Activated naive CD4-positive, alpha-beta T cell treated with anti-CD3 and anti-CD28 coated beads for 36 hours (primary cell): ENCODE measurements at regions of chr2 and their contacts with region 1.

Region 1: GRCh38 chr2:138486363-138487198 is 15.0 kb upstream of the SPOPL start:
- DNase-seq: no peak
- H3K4me3 Mint-ChIP-seq: no peak overlapping the region
- H3K27ac Mint-ChIP-seq: no peak overlapping the region
- H3K4me1 Mint-ChIP-seq: no peaks in the 10 kb centered on the region
- H3K27me3 Mint-ChIP-seq: no peaks in the 10 kb centered on the region

Region 2: DNA sequence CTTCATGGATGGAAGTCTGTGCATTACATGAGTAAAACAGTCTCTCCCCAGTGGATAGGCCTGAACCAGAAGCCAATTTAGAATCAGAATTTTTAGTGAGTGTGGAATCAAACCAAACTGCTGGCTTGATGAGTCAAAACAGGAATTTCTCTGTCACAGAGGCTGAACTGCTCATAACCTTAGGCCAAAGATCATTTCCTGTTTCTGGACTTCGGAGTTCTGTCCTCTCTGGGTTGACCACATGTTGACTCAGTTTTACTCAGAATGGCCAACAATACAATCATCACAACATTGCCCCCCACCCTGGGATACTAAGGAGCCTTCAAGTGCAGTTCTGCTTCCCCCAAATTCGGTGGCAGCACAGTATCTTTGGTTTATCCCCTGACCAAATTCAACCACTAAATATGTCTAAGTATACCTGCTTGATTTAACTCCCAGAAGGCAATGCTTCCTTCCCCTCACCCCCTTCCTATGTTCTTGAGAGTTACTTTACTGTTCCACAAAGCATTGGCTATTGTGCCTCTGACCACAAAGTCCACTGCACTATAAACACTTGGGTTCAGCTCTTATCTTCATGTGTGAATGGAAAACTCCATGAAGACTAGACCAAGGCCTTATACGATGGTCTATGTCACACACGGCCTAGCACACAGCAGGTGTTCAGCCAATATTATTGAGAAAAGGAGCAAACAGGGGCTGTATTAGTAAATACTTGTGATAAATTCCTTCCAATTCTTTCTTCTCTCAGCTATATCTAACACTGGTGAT is 225.8 kb after region 1 on chr2:
- CTCF ChIA-PET with region 1: no interaction called
- intact Hi-C with region 1: loop called (anchors 10 kb)
- DNase-seq: no peak
- H3K4me3 Mint-ChIP-seq: no peak overlapping the region
- H3K27ac Mint-ChIP-seq: no peak overlapping the region
- H3K4me1 Mint-ChIP-seq: no peaks in the 10 kb centered on the region
- H3K27me3 Mint-ChIP-seq: peaks cover 10% of the 10 kb centered on the region

Region 3: DNA sequence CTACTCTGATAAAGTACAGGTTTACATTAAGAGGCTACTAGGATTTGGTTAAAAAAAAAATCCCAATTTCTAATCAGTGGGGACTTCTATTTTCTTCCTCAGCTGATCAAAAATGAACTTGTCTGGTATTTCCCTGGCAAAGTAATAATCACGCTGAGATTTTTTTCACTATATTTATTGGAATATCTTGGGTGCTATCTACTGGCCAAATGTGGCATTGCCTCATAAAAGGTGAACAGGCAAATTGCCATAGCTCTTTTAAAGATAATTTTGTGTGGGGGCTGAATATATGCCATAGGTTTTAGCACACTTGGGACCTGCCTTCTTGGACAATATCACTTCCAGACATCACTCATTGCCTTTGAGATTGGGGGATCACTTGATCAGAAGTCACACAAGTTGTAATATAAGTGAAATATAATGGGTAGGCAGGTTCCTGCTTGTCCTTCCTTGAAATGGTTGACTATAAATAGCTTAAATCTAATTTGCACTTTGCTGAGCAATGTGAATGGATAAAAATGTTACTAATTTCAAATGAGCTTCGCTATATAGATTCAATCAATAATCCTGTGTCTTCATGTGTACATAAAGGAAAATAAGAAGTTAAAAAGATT is 300.6 kb after region 1 on chr2:
- CTCF ChIA-PET with region 1: no interaction called
- intact Hi-C with region 1: loop called (anchors 5 kb)
- DNase-seq: peak; percentile 6
- H3K4me3 Mint-ChIP-seq: no peak overlapping the region
- H3K27ac Mint-ChIP-seq: no peak overlapping the region
- H3K4me1 Mint-ChIP-seq: no peaks in the 10 kb centered on the region
- H3K27me3 Mint-ChIP-seq: peaks cover 13% of the 10 kb centered on the region